CD4-positive, alpha-beta memory T cell (primary cell): ENCODE measurements at regions of chr1 and their contacts with region 1.

Region 1: GRCh38 chr1:1206376-1207260 is at the start of gene TNFRSF18:
- DNase-seq: peak in 3 of 5 donors; percentile 41 to 62 (median 42)
- H3K4me3 ChIP-seq: peak within 1 kb of the TSS in 1 of 2 donors; percentile 57
- H3K4me3 Mint-ChIP-seq: peak within 1 kb of the TSS; percentile 65 to 78 (median 75)
- H3K27ac ChIP-seq: peak within 1 kb of the TSS; percentile 84
- H3K27ac Mint-ChIP-seq: peak within 1 kb of the TSS; percentile 57 to 98 (median 77)
- H3K4me1 ChIP-seq: peaks cover 49% of the 10 kb centered on the region
- H3K4me1 Mint-ChIP-seq: peaks cover 9 to 34% (median 21%) of the 10 kb centered on the region in 4 donors
- H3K27me3 ChIP-seq: no peaks in the 10 kb centered on the region
- H3K27me3 Mint-ChIP-seq: no peaks in the 10 kb centered on the region
- total RNA-seq, gene TNFRSF18: 8.0 to 8.6 TPM

Region 2: GRCh38 chr1:1157426-1157913 is 49.1 kb before region 1 on chr1:
- CTCF ChIA-PET with region 1: no interaction called
- POLR2A ChIA-PET with region 1: interaction called, 13 read pairs
- intact Hi-C with region 1: loop called (anchors 5 kb)
- DNase-seq: peak; percentile 41 to 71 (median 48)
- H3K4me3 ChIP-seq: peak overlapping the region; percentile 56 to 78
- H3K4me3 Mint-ChIP-seq: peak overlapping the region; percentile 63 to 87 (median 79)
- H3K27ac ChIP-seq: peak overlapping the region; percentile 86
- H3K27ac Mint-ChIP-seq: peak overlapping the region; percentile 58 to 90 (median 77)
- H3K4me1 ChIP-seq: peaks cover 8% of the 10 kb centered on the region
- H3K4me1 Mint-ChIP-seq: peaks cover 0 to 14% (median 3%) of the 10 kb centered on the region in 4 donors
- H3K27me3 ChIP-seq: no peaks in the 10 kb centered on the region
- H3K27me3 Mint-ChIP-seq: no peaks in the 10 kb centered on the region

Region 3: GRCh38 chr1:1217621-1218523 is 11.3 kb after region 1 on chr1:
- CTCF ChIA-PET with region 1: no interaction called
- POLR2A ChIA-PET with region 1: interaction called, 38 read pairs
- intact Hi-C with region 1: no loop called
- DNase-seq: no peak
- H3K4me3 ChIP-seq: no peak overlapping the region
- H3K4me3 Mint-ChIP-seq: peak overlapping the region in 5 of 8 donors; percentile 15 to 49 (median 42)
- H3K27ac ChIP-seq: peak overlapping the region; percentile 86
- H3K27ac Mint-ChIP-seq: peak overlapping the region; percentile 79 to 98 (median 86)
- H3K4me1 ChIP-seq: peaks cover 70% of the 10 kb centered on the region
- H3K4me1 Mint-ChIP-seq: peaks cover 20 to 64% (median 39%) of the 10 kb centered on the region in 4 donors
- H3K27me3 ChIP-seq: no peaks in the 10 kb centered on the region
- H3K27me3 Mint-ChIP-seq: no peaks in the 10 kb centered on the region